Left ventricle myocardium inferior (tissue), 1 donor: ENCODE measurements at regions of chr6 and their contacts with region 1.

Region 1: GRCh38 chr6:157667211-157668008 is 155.6 kb upstream of the SNX9 start:
- DNase-seq: no peak
- H3K4me3 ChIP-seq: no peak overlapping the region
- H3K27ac ChIP-seq: no peak overlapping the region
- H3K4me1 ChIP-seq: peaks cover 26% of the 10 kb centered on the region
- H3K27me3 ChIP-seq: no peaks in the 10 kb centered on the region
- CTCF ChIP-seq: peak; percentile 91

Region 2: GRCh38 chr6:157314705-157315321 is 352.6 kb before region 1 on chr6:
- intact Hi-C with region 1: loop called (anchors 5 kb)
- DNase-seq: no peak
- H3K4me3 ChIP-seq: no peak overlapping the region
- H3K27ac ChIP-seq: peak overlapping the region; percentile 4
- H3K4me1 ChIP-seq: peaks cover 25% of the 10 kb centered on the region
- H3K27me3 ChIP-seq: no peaks in the 10 kb centered on the region
- CTCF ChIP-seq: peak; percentile 82

Region 3: GRCh38 chr6:157756708-157757429 is 89.5 kb after region 1 on chr6:
- intact Hi-C with region 1: loop called (anchors 10 kb)
- DNase-seq: peak; percentile 88
- H3K4me3 ChIP-seq: no peak overlapping the region
- H3K27ac ChIP-seq: peak overlapping the region; percentile 27
- H3K4me1 ChIP-seq: peaks cover 30% of the 10 kb centered on the region
- H3K27me3 ChIP-seq: no peaks in the 10 kb centered on the region
- CTCF ChIP-seq: peak; percentile 88